ENCODE measurements at regions of chr14 and their contacts with region 1.

Region 1: DNA sequence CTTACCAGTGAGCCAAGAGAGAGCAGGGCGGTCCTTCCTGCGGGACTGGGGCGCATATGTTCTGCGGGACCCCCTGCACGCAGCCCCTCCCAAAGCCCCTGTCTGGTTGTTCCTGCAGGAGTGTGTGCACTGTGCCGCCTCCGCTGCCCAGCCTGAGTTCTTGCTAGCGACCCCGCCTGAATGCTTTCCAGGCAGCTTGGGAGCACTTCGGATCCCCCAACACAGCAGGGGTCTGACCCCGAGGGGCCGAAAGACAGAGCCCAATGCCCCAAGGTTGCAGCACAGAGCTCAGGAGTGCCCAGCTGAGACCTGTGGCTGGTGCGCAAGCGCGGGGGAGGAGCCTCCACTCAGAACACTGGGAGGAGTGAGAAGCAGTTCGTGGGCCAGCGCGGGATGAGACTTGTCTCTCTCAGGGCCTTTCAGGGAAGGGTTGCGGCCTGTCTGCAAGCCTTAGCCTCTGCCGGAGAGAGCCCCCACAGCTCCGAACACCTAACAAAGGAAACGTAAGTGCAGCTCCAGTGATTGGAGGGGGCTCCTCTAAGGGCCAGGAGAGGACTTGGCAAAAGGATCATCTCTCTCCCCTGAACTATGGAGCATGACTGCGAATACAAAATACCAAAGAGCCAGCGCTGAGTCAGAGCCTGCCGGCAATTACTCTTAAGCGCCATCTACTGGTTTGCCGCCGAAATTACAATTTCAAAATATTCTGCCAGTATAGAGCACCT is 50.5 kb downstream of the GTF2A1 start:
- DNase-seq: peak; percentile 95
- H3K4me3 ChIP-seq: peak overlapping the region; percentile 84
- H3K27ac ChIP-seq: peak overlapping the region; percentile 97
- H3K4me1 ChIP-seq: peaks cover 19% of the 10 kb centered on the region
- H3K27me3 ChIP-seq: no peaks in the 10 kb centered on the region
- CTCF ChIP-seq: peak; percentile 93

Region 2: DNA sequence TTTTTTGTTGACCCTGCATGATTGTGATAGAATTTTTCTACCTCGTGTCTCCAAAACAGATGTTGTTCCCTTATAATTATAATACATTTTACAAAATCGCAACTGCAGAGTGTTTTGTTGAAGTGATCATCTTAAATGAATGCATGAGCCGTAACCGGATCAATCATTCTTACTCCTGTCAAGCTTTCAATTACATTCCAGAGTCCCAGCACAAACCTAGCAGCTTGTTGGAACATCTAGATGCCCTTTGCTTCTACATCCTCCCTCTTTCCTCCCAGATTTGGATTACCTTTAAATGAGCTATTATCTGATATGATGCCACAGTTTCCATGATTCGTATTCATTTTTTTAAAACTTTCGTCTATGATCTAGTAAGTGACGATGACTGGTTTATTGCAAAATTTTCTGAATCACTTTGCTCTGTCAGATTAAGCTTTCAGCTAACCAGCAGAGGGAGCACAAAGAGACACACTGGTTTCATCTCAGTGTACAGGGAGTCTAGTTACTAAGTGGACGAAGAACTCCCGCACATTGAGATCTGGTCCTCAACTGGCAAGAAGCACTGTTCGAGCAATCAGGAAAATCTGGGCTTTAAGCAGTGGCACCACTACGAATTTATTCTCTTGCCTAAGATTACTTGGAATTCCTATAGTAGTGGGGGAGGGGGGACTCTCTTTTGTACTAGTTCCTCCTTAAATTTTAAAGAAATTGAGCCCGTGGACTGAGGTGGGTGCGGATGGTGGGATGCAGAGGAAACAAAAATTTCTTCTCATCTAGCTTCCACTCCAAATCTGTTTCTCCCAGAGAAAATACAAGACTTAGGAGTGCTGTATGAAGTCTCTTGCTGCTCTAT is 174.0 kb before region 1 on chr14:
- intact Hi-C with region 1: loop called (anchors 5 kb)
- DNase-seq: no peak
- H3K4me3 ChIP-seq: no peak overlapping the region
- H3K27ac ChIP-seq: no peak overlapping the region
- H3K4me1 ChIP-seq: peaks cover 6% of the 10 kb centered on the region
- H3K27me3 ChIP-seq: peaks cover 27% of the 10 kb centered on the region
- CTCF ChIP-seq: peak; percentile 73

Measured in left ventricle myocardium inferior (tissue), 1 donor.